Caco-2 (cell line): ENCODE measurements at regions of chr10 and their contacts with region 1.

Region 1: GRCh38 chr10:100827819-100828737 is 82.7 kb downstream of the PAX2 start:
- DNase-seq: peak; percentile 61 to 79
- H3K4me3 ChIP-seq: peak overlapping the region; percentile 77
- H3K4me3 Mint-ChIP-seq: peak overlapping the region; percentile 80
- H3K27ac Mint-ChIP-seq: no peak overlapping the region
- H3K4me1 ChIP-seq: peaks cover 10% of the 10 kb centered on the region; the same call in 1 of the 2 replicates
- H3K4me1 Mint-ChIP-seq: peaks cover 10% of the 10 kb centered on the region
- H3K27me3 ChIP-seq: peaks cover 5% of the 10 kb centered on the region; the same call in 1 of the 2 replicates
- H3K27me3 Mint-ChIP-seq: peaks cover 33% of the 10 kb centered on the region
- CTCF ChIP-seq: peak in 1 of 2 experiments; percentile 57

Region 2: GRCh38 chr10:100683545-100684300 is 144.4 kb before region 1 on chr10:
- CTCF ChIA-PET with region 1: no interaction called
- POLR2A ChIA-PET with region 1: no interaction called
- intact Hi-C with region 1: loop called (anchors 5 kb)
- DNase-seq: no peak
- H3K4me3 ChIP-seq: no peak overlapping the region
- H3K4me3 Mint-ChIP-seq: no peak overlapping the region
- H3K27ac Mint-ChIP-seq: no peak overlapping the region
- H3K4me1 ChIP-seq: no peaks in the 10 kb centered on the region
- H3K4me1 Mint-ChIP-seq: no peaks in the 10 kb centered on the region
- H3K27me3 ChIP-seq: peaks cover 6% of the 10 kb centered on the region
- H3K27me3 Mint-ChIP-seq: peaks cover 45% of the 10 kb centered on the region
- CTCF ChIP-seq: no peak

Region 3: GRCh38 chr10:100766693-100767421 is 61.2 kb before region 1 on chr10:
- CTCF ChIA-PET with region 1: no interaction called
- POLR2A ChIA-PET with region 1: no interaction called
- intact Hi-C with region 1: loop called (anchors 1 kb)
- DNase-seq: peak in 1 of 2 experiments; percentile 53
- H3K4me3 ChIP-seq: no peak overlapping the region
- H3K4me3 Mint-ChIP-seq: no peak overlapping the region
- H3K27ac Mint-ChIP-seq: no peak overlapping the region
- H3K4me1 ChIP-seq: no peaks in the 10 kb centered on the region
- H3K4me1 Mint-ChIP-seq: no peaks in the 10 kb centered on the region
- H3K27me3 ChIP-seq: no peaks in the 10 kb centered on the region
- H3K27me3 Mint-ChIP-seq: peaks cover 23% of the 10 kb centered on the region
- CTCF ChIP-seq: peak; percentile 8 to 71